AG04450 (cell line): ENCODE measurements at regions of chr1 and their contacts with region 1.

Region 1: GRCh38 chr1:201254625-201255506 is 28.4 kb upstream of the PKP1 start:
- DNase-seq: no peak
- H3K4me3 ChIP-seq: no peak overlapping the region
- H3K27ac ChIP-seq: no peak overlapping the region
- H3K27me3 ChIP-seq: peaks cover 16% of the 10 kb centered on the region
- CTCF ChIP-seq: peak; percentile 95

Region 2: GRCh38 chr1:200992382-200993048 is 262.4 kb before region 1 on chr1:
- CTCF ChIA-PET with region 1: no interaction called
- POLR2A ChIA-PET with region 1: no interaction called
- DNase-seq: no peak
- H3K4me3 ChIP-seq: no peak overlapping the region
- H3K27ac ChIP-seq: no peak overlapping the region
- H3K27me3 ChIP-seq: peaks cover 2% of the 10 kb centered on the region
- CTCF ChIP-seq: no peak

Region 3: GRCh38 chr1:201266774-201267173 is 11.9 kb after region 1 on chr1:
- CTCF ChIA-PET with region 1: interaction called, 10 read pairs
- POLR2A ChIA-PET with region 1: interaction called, 3 read pairs
- DNase-seq: peak; percentile 72
- H3K4me3 ChIP-seq: no peak overlapping the region
- H3K27ac ChIP-seq: no peak overlapping the region
- H3K27me3 ChIP-seq: no peaks in the 10 kb centered on the region
- CTCF ChIP-seq: no peak

Region 4: DNA sequence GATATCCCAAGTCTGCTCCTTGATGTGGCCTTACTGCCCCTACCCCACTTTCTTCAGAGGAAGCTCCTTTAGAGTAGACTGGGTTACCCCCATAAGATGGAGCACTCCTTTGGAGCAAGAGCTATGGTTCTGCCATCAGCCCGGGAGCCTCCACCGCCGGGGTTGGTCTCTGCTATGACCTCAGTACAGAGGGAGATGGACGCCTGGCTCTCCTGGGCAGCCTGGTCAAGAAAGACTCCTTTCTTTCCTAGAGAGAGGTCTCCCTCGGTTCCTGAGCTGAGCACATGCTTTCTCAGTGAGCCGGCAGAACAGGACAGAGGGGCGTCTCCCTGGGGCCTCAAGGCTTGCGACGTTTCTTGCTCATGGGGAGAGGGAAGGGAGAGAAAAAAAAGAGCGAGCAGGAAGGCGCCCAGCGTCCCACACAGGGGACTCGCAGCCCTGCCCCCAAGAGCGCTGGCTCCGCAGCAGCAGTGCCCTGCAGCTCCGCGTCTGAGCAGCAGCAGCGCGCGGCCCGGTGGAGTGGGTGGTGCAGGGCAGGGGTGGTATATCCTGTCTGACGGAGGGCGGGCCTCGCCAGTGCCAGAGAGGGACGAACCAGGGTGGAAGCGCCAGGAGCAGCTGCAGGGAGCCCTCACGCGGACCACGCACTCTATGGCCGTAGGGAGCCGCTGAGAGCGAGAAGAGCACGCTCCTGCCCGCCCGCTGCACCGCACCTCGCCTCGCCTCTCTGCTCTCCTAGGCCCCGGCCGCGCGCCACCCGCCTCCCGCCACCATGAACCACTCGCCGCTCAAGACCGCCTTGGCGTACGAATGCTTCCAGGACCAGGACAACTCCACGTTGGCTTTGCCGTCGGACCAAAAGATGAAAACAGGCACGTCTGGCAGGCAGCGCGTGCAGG is 28.3 kb after region 1 on chr1 and contains the start of gene PKP1:
- CTCF ChIA-PET with region 1: interaction called, 13 read pairs
- POLR2A ChIA-PET with region 1: no interaction called
- DNase-seq: no peak
- H3K4me3 ChIP-seq: peak within 1 kb of the TSS; percentile 37
- H3K27ac ChIP-seq: no peak within 1 kb of the TSS
- H3K27me3 ChIP-seq: peaks cover 52% of the 10 kb centered on the region
- CTCF ChIP-seq: no peak
- polyA plus RNA-seq, gene PKP1: 0.04 TPM in 2 replicates

Region 5: GRCh38 chr1:201361652-201362504 is 107.0 kb after region 1 on chr1:
- CTCF ChIA-PET with region 1: interaction called, 89 read pairs
- POLR2A ChIA-PET with region 1: no interaction called
- DNase-seq: no peak
- H3K4me3 ChIP-seq: no peak overlapping the region
- H3K27ac ChIP-seq: no peak overlapping the region
- H3K27me3 ChIP-seq: peaks cover 37% of the 10 kb centered on the region
- CTCF ChIP-seq: peak; percentile 84

Region 6: GRCh38 chr1:201408176-201408833 is 153.4 kb after region 1 on chr1:
- CTCF ChIA-PET with region 1: interaction called, 10 read pairs
- POLR2A ChIA-PET with region 1: no interaction called
- DNase-seq: peak; percentile 43
- H3K4me3 ChIP-seq: no peak overlapping the region
- H3K27ac ChIP-seq: no peak overlapping the region
- H3K27me3 ChIP-seq: peaks cover 56% of the 10 kb centered on the region
- CTCF ChIP-seq: peak; percentile 99